ENCODE measurements at regions of chr17 and their contacts with region 1.

Region 1: GRCh38 chr17:76408052-76408849 is 23.8 kb downstream of the SPHK1 start:
- H3K4me3 ChIP-seq: no peak overlapping the region
- H3K27ac ChIP-seq: no peak overlapping the region
- H3K4me1 ChIP-seq: peaks cover 10% of the 10 kb centered on the region
- CTCF ChIP-seq: peak; percentile 59

Region 2: DNA sequence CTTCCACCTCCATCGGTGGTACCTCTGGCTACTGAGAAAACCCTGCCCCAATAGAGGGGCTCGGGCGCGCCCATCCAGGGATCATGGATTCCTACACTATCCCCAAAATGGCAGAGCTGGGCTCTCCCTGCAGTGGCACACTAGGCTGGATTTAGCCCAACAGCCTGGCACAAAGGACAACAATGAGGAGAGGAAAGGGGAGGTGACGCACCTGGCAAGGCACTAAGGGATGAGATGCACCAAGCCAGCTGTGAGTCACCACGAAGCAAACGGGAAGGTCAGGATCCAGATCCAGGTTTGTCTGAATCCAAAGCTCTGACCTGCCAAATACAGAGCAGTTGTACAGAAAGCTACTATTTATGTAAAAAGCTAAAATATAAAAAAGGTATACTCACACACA is 26.6 kb after region 1 on chr17:
- CTCF ChIA-PET with region 1: interaction called, 15 read pairs
- POLR2A ChIA-PET with region 1: no interaction called
- H3K4me3 ChIP-seq: no peak overlapping the region
- H3K27ac ChIP-seq: no peak overlapping the region
- H3K4me1 ChIP-seq: peaks cover 21% of the 10 kb centered on the region
- CTCF ChIP-seq: no peak

Region 3: DNA sequence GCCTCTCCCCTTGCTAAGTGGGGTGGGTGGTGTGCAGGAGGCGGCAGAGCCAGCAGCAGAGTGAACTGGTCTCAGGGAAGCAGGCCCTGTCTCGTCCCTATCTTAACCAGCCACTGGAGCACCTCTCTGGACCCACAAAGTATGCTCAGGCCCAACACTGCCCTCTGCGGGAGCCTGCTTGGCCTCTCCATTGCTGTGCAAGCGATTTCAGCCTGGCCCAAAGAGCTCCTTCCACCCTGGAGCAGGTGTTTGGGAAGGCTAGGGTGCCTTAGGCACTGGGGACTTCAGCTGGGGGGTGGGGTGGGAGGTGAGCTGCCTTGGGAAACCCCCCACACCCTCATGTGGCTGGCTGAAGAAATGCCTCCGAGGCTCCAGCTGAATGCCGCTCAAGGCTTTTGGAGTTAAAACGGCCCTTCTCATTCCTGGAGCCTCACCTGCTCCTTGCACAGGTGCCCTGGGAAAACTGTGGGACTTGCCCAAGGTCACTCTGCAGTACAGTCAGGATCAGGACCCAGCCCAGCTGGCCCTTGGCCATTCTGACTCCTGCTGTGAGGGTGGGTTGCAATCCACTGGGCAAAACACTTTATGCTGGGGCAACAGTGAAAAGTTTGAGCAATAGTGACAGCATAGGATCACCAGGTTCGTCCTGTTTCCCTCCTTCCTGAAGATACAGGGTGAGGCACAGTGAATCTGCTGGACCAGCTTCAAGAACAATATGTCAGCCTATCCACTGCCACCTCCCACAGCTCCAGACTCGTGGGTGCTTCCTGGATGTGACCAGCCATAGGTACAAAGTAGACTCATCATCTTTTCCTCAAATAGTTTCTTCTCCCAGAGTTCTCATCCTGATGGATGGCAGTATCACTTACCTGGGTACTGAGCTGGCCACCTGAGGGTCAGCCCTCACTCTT is 50.6 kb after region 1 on chr17:
- CTCF ChIA-PET with region 1: interaction called, 43 read pairs
- POLR2A ChIA-PET with region 1: interaction called, 3 read pairs
- H3K4me3 ChIP-seq: no peak overlapping the region
- H3K27ac ChIP-seq: no peak overlapping the region
- H3K4me1 ChIP-seq: no peaks in the 10 kb centered on the region
- CTCF ChIP-seq: peak; percentile 79

Region 4: GRCh38 chr17:76501018-76501826 is 93.0 kb after region 1 on chr17 and contains the start of gene RHBDF2:
- CTCF ChIA-PET with region 1: interaction called, 22 read pairs
- POLR2A ChIA-PET with region 1: interaction called, 3 read pairs
- H3K4me3 ChIP-seq: peak within 1 kb of the TSS; percentile 66
- H3K27ac ChIP-seq: peak within 1 kb of the TSS; percentile 39; the same call in 1 of the 2 replicates
- H3K4me1 ChIP-seq: peaks cover 16% of the 10 kb centered on the region
- CTCF ChIP-seq: no peak

Measured in HEK293 (cell line).